ENCODE measurements at regions of chrX and their contacts with region 1.

Region 1: GRCh38 chrX:63754860-63755582 is 30.0 kb downstream of the ARHGEF9 start:
- DNase-seq: peak; percentile 82 to 90 (median 87)
- H3K4me3 ChIP-seq: peak overlapping the region; percentile 74 to 77
- H3K4me3 Mint-ChIP-seq: peak overlapping the region; percentile 94 to 99 (median 98)
- H3K27ac ChIP-seq: peak overlapping the region; percentile 79
- H3K27ac Mint-ChIP-seq: peak overlapping the region; percentile 94 to 99 (median 98)
- H3K4me1 ChIP-seq: peaks cover 20% of the 10 kb centered on the region
- H3K4me1 Mint-ChIP-seq: peaks cover 13 to 33% (median 15%) of the 10 kb centered on the region in 4 donors
- H3K27me3 ChIP-seq: no peaks in the 10 kb centered on the region
- H3K27me3 Mint-ChIP-seq: no peaks in the 10 kb centered on the region

Region 2: DNA sequence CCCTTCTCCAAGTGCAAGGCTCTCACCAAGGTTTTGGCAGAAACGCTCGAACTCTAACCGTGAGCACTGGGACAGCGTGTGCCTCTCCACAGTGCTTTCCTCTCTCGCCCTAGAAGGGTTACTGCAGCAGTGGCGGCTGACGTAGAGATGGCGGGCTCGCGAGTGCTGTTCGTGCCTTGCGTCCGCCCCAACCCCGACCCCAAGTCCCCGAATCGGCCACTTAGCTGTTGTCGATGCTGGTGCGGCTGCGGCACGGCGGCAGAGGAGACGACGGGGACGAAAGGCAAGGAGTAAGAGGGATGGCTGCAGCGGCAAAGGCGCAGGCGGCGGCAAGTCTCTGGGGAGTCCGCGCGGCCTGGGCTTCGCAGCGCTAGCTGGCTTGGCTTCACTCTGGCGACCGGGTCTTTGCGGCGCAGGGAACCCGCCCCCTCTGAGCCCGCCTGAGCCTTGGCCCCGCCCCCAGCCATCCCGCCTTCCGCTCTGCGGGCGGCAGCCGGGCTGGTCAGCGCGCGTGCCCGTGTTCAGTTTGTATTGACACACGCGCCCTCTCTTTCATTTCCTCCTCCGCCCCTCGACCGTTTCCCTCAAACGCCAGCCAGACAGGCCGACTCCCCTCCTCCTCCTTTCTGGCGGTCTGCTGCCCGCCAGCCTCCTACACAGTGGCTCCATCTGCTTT is 403.9 kb before region 1 on chrX and contains the start of gene SPIN4:
- CTCF ChIA-PET with region 1: no interaction called
- POLR2A ChIA-PET with region 1: no interaction called
- intact Hi-C with region 1: loop called (anchors 1 kb)
- DNase-seq: peak; percentile 40 to 47 (median 43)
- H3K4me3 ChIP-seq: peak within 1 kb of the TSS; percentile 40 to 63
- H3K4me3 Mint-ChIP-seq: peak within 1 kb of the TSS; percentile 83 to 95 (median 92)
- H3K27ac ChIP-seq: peak within 1 kb of the TSS; percentile 37
- H3K27ac Mint-ChIP-seq: peak within 1 kb of the TSS; percentile 74 to 89 (median 86)
- H3K4me1 ChIP-seq: peaks cover 15% of the 10 kb centered on the region
- H3K4me1 Mint-ChIP-seq: peaks cover 8 to 29% (median 16%) of the 10 kb centered on the region in 4 donors
- H3K27me3 ChIP-seq: no peaks in the 10 kb centered on the region
- H3K27me3 Mint-ChIP-seq: no peaks in the 10 kb centered on the region
- total RNA-seq, gene SPIN4: 3.8 to 4.2 TPM

Region 3: DNA sequence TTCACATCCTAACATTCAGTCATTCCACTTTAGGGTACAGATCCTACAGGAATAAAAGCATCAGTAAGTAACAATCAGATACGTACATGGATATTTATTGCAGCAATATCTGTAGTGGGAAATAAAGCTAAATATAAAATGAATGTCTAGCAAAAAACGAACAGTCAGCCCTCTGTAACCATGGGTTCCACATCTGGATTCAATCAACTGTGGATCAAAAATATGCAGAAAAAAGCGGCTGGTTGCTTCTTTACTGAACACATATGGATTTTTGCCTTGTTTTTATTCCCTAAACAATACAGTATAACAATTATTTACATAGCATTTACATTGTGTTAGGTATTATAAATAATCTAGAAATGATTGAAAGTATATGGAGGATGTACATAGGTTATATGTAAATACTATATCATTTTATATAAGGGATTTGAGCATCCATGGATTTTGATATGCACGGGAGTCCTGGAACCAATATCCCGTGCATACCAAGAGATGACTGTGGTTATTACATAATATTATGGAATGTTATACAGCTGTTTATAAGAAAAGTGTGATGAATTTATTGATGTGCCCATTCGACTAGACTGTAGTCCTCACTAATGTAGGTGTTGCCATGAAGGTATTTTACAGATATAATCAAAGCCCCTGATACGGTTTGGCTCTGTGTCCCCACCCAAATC is 102.8 kb before region 1 on chrX:
- CTCF ChIA-PET with region 1: no interaction called
- POLR2A ChIA-PET with region 1: no interaction called
- intact Hi-C with region 1: no loop called
- DNase-seq: no peak
- H3K4me3 ChIP-seq: no peak overlapping the region
- H3K4me3 Mint-ChIP-seq: no peak overlapping the region
- H3K27ac ChIP-seq: no peak overlapping the region
- H3K27ac Mint-ChIP-seq: no peak overlapping the region
- H3K4me1 ChIP-seq: no peaks in the 10 kb centered on the region
- H3K4me1 Mint-ChIP-seq: peaks cover 0 to 3% (median 0%) of the 10 kb centered on the region in 4 donors
- H3K27me3 ChIP-seq: no peaks in the 10 kb centered on the region
- H3K27me3 Mint-ChIP-seq: no peaks in the 10 kb centered on the region

Region 4: GRCh38 chrX:63765712-63766111 is 10.7 kb after region 1 on chrX:
- CTCF ChIA-PET with region 1: no interaction called
- POLR2A ChIA-PET with region 1: no interaction called
- intact Hi-C with region 1: no loop called
- DNase-seq: no peak
- H3K4me3 ChIP-seq: no peak overlapping the region
- H3K4me3 Mint-ChIP-seq: no peak overlapping the region
- H3K27ac ChIP-seq: no peak overlapping the region
- H3K27ac Mint-ChIP-seq: no peak overlapping the region
- H3K4me1 ChIP-seq: no peaks in the 10 kb centered on the region
- H3K4me1 Mint-ChIP-seq: no peaks in the 10 kb centered on the region
- H3K27me3 ChIP-seq: no peaks in the 10 kb centered on the region
- H3K27me3 Mint-ChIP-seq: peaks cover 1 to 3% of the 10 kb centered on the region in 2 donors

Region 5: GRCh38 chrX:64186974-64187761 is 432.1 kb after region 1 on chrX:
- CTCF ChIA-PET with region 1: no interaction called
- POLR2A ChIA-PET with region 1: no interaction called
- intact Hi-C with region 1: no loop called
- DNase-seq: no peak
- H3K4me3 ChIP-seq: no peak overlapping the region
- H3K4me3 Mint-ChIP-seq: no peak overlapping the region
- H3K27ac ChIP-seq: no peak overlapping the region
- H3K27ac Mint-ChIP-seq: no peak overlapping the region
- H3K4me1 ChIP-seq: no peaks in the 10 kb centered on the region
- H3K4me1 Mint-ChIP-seq: no peaks in the 10 kb centered on the region
- H3K27me3 ChIP-seq: no peaks in the 10 kb centered on the region
- H3K27me3 Mint-ChIP-seq: no peaks in the 10 kb centered on the region

Region 6: DNA sequence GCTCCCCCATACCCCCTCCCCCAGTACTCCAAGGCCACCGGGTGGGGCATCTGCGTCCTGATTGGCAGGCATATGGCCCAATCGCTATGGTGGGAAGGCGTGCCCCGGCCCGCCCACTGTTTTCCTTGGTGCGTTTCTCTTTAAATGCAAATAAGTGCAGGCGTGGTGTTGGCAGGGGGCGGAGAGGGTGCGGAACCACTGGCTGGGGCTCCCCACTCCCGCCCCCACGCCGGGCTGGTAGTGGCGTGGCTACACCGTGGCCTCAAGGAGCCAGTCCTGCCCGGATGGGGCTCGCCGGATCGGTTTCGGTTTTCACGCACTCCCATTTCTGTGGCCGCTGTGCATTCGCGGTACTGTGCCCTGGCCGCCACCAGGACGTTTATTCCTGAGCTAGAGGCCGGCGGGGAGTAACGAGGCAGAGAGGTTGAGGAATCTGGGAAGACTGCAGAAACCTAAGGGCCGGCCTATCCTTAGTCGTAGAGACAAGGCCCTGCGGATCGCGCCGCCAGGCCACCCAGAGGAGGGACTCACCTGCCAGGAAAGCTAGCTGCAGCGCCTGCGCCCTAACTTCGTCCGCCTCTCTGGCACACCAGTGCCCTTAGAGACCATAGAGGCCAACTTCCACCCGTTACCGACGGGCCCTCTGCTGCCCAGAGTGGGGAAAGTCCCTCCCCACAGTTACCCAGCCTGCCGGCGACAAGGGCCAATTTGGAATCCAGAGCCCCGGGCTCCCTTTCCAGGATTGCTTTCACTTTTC is 450.9 kb after region 1 on chrX:
- CTCF ChIA-PET with region 1: interaction called, 3 read pairs
- POLR2A ChIA-PET with region 1: interaction called, 5 read pairs
- intact Hi-C with region 1: loop called (anchors 1 kb)
- DNase-seq: peak; percentile 85 to 91 (median 87)
- H3K4me3 ChIP-seq: peak overlapping the region; percentile 42 to 83
- H3K4me3 Mint-ChIP-seq: peak overlapping the region; percentile 91 to 97 (median 93)
- H3K27ac ChIP-seq: peak overlapping the region; percentile 79
- H3K27ac Mint-ChIP-seq: peak overlapping the region; percentile 90 to 96 (median 93)
- H3K4me1 ChIP-seq: peaks cover 15% of the 10 kb centered on the region
- H3K4me1 Mint-ChIP-seq: peaks cover 6 to 25% (median 16%) of the 10 kb centered on the region in 4 donors
- H3K27me3 ChIP-seq: no peaks in the 10 kb centered on the region
- H3K27me3 Mint-ChIP-seq: no peaks in the 10 kb centered on the region

Region 7: DNA sequence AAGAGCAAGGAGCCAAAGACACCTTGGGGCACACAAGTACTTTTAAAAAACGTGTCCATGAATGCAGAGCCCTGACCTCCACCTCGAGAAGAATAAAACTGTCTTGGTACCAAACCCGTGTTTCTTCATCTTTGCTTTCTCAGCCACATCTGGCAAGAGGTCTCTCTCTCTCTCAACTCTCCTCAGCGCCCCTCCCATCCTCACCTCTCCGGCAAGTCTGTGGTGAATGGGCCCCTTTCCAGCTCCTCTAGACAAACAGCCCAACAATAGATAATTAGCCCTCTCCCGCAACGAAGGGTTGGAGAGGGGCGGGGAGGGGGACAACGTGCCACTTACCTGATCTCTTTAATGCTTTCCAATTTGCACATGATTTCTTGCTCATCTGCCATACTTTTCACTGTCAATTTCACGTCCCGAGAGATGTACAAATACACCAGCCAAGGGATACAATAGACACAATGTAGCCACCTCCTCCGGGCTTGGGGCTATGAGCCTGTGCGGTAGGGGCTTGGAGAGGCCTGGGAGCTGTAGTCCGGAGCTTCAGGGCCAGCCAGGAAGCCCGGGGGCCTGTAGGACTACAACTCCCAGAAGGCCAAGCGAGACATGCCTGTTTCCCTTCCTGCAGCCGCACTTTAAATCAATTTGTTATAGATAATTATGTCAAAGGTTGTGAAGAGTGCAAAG is 1221.1 kb after region 1 on chrX and contains the start of gene ZC4H2:
- CTCF ChIA-PET with region 1: no interaction called
- POLR2A ChIA-PET with region 1: no interaction called
- intact Hi-C with region 1: loop called (anchors 2 kb)
- DNase-seq: peak; percentile 65 to 77 (median 68)
- H3K4me3 ChIP-seq: peak within 1 kb of the TSS; percentile 61 to 73
- H3K4me3 Mint-ChIP-seq: peak within 1 kb of the TSS; percentile 89 to 98 (median 96)
- H3K27ac ChIP-seq: peak within 1 kb of the TSS; percentile 24
- H3K27ac Mint-ChIP-seq: peak within 1 kb of the TSS; percentile 65 to 91 (median 87)
- H3K4me1 ChIP-seq: peaks cover 15% of the 10 kb centered on the region
- H3K4me1 Mint-ChIP-seq: peaks cover 4 to 33% (median 16%) of the 10 kb centered on the region in 4 donors
- H3K27me3 ChIP-seq: no peaks in the 10 kb centered on the region
- H3K27me3 Mint-ChIP-seq: no peaks in the 10 kb centered on the region
- total RNA-seq, gene ZC4H2: 8.2 to 11.8 TPM

Region 8: DNA sequence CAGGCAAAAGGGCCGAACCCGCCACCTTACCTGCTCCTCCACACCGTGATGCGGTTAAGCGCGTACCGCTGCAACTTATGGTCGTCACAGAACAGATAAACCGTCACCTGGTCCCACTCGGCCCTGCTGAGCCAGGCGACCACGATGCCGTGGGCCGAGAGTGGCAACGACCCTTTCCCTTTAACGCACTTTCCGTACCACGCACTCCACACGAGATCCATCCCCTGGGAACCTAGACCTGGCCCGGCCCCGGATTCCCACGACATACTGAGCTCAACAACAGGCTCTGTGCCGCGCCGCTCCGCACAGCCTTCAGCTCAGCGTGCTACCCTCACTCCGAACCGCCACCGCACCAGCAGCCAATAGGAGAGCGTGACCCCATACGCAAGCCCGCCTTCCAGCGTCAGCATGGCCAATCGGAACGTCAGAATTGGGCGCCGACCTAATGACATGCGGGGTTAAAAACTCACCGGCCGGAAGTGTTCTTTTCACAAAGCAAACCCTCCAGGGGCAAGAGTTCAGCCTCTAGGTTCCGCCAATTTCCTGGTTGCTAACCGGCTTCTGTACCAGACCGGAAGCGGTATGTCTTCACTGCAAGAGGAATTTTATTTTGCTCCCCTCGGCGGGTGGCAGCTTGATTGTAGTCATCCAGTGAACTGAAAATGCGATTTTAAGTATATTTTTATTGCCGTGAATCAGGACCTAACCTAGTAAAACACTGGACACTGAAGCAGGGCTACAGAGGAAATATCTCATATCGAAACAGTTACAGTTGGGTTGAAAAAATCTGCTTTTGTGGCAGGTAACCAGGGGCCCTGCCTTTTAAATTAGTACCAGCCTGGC is 1779.7 kb after region 1 on chrX and contains the start of gene LAS1L:
- CTCF ChIA-PET with region 1: interaction called, 3 read pairs
- POLR2A ChIA-PET with region 1: no interaction called
- intact Hi-C with region 1: loop called (anchors 1 kb)
- DNase-seq: peak; percentile 90 to 94 (median 91)
- H3K4me3 ChIP-seq: peak within 1 kb of the TSS; percentile 66 to 75
- H3K4me3 Mint-ChIP-seq: peak within 1 kb of the TSS; percentile 97 to 100 (median 100)
- H3K27ac ChIP-seq: peak within 1 kb of the TSS; percentile 73
- H3K27ac Mint-ChIP-seq: peak within 1 kb of the TSS; percentile 97 to 100 (median 99)
- H3K4me1 ChIP-seq: peaks cover 18% of the 10 kb centered on the region
- H3K4me1 Mint-ChIP-seq: peaks cover 7 to 24% (median 16%) of the 10 kb centered on the region in 4 donors
- H3K27me3 ChIP-seq: no peaks in the 10 kb centered on the region
- H3K27me3 Mint-ChIP-seq: no peaks in the 10 kb centered on the region
- total RNA-seq, gene LAS1L: 38.5 to 41.6 TPM